HEK293 (cell line): ENCODE measurements at regions of chr6 and their contacts with region 1.

Region 1: DNA sequence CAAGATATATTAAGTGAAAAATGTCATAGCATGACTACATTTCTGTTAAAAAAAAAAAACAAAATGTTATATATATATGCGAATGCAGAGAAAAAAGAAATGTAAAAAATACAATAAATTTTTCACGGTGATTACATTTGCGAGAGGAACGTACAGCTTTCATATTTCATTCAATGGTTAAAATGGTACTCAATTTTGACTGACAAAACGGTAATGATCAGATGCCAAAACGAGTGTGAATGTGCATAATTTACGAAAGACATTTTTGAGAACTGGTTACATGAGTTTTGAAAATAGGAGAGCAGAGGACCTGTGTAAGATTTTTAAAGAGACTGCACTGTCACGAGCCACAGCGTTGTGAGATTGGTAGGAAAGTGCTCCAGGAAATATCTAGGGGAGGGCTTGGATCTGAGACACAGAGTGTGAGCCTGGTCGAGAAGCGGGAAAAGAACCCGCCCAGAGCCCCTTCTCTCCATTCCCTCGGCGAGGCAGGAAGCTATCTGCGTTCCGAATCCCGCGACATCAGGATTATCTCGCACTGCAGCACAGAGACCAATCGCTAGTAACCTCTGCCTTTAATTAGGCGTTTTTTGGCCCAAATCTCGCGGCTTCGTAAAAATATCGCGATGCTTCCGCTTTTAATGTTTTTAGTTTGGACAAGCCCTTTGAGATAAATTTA is 28.5 kb downstream of the TRIM27 start:
- H3K4me3 ChIP-seq: peak overlapping the region; percentile 66
- H3K27ac ChIP-seq: peak overlapping the region; percentile 79
- H3K4me1 ChIP-seq: peaks cover 3% of the 10 kb centered on the region; the same call in 1 of the 2 replicates
- CTCF ChIP-seq: no peak

Region 2: GRCh38 chr6:28863604-28864320 is 31.5 kb before region 1 on chr6:
- CTCF ChIA-PET with region 1: interaction called, 3 read pairs
- POLR2A ChIA-PET with region 1: interaction called, 13 read pairs
- H3K4me3 ChIP-seq: peak overlapping the region; percentile 77
- H3K27ac ChIP-seq: peak overlapping the region; percentile 60; the same call in 1 of the 2 replicates
- H3K4me1 ChIP-seq: no peaks in the 10 kb centered on the region
- CTCF ChIP-seq: peak; percentile 70

Region 3: DNA sequence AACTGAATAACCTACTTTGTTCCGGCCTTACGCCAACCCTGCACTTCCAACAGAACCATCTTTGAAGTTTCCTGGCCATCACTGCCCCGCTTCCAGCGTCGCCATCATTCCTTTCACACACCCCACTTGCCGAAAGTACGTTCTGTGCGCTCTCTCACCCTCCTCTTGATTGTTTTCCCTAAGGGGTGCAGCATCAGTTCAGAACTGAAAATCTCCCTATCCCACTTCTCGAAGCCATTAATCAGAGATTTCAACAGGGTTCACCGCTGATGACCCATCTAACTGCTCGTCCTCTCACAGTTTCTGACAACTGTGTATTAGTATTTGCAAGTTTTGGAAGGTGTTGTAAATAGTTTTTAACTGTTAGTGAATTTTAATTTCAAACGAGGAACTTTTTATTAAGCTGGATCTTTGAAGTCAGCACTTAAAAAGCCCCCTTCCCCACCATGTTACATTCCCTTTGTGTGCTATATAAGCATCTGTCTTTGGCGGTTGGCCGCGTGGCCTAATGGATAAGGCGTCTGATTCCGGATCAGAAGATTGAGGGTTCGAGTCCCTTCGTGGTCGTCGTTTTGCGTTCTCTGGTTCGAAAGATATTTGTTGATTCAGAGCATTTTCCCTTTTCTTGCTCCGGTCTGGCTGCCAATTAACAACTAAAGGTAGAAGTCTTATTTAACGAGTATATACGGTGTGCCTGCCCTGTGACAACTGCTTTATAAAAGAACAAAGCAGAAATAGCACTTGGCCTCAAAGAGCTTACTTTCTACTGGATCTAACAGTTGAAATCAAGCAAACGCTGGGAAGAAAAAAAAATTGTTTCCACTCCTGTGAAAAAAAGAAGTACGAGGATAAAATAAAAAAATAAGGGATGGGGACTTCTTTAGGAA is 14.1 kb before region 1 on chr6:
- CTCF ChIA-PET with region 1: interaction called, 8 read pairs
- POLR2A ChIA-PET with region 1: interaction called, 27 read pairs
- H3K4me3 ChIP-seq: peak overlapping the region; percentile 56
- H3K27ac ChIP-seq: peak overlapping the region; percentile 28; the same call in 1 of the 2 replicates
- H3K4me1 ChIP-seq: no peaks in the 10 kb centered on the region
- CTCF ChIP-seq: no peak

Region 4: DNA sequence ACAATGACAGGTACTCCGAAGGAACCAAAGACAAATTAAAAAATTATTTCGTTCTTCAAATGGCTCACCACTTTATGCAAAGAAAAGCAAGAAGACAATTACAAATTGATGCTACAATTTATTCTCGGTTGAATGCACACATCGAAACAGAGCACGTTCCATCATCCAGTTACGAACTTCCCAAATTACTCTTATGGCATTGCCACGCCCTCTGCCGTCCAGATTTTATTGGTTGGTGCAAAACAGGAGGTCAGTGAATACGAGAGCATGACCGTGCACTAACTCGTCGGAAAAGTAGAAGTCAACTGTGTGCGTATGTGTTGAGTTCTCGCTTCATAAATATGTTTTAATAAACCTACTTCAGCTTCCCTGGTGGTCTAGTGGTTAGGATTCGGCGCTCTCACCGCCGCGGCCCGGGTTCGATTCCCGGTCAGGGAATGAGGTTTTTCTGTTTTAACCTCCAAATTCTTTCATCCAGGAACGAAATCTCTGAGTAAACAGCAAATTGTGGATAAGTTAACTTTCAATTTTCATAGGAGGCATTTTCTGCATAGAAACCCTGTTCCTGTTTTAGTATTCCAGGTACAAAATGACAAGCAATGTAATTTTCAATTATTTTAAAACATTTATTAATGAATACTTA is 86.7 kb after region 1 on chr6:
- CTCF ChIA-PET with region 1: interaction called, 3 read pairs
- POLR2A ChIA-PET with region 1: interaction called, 16 read pairs
- H3K4me3 ChIP-seq: peak overlapping the region; percentile 73
- H3K27ac ChIP-seq: no peak overlapping the region
- H3K4me1 ChIP-seq: peaks cover 5% of the 10 kb centered on the region; the same call in 1 of the 2 replicates
- CTCF ChIP-seq: peak; percentile 50; the same call in 1 of the 2 replicates